Activated CD4-positive, alpha-beta memory T cell treated with anti-CD3 and anti-CD28 coated beads, Interleukin-2, amount 10 ng/mL, durations not matched to agents 7 days and 5 days (primary cell): ENCODE measurements at regions of chr13 and their contacts with region 1.

Region 1: GRCh38 chr13:99436686-99437416 is 64.4 kb upstream of the TM9SF2 start:
- DNase-seq: peak; percentile 96
- H3K4me3 Mint-ChIP-seq: peak overlapping the region; percentile 51
- H3K27ac Mint-ChIP-seq: peak overlapping the region; percentile 48
- H3K4me1 Mint-ChIP-seq: peaks cover 66% of the 10 kb centered on the region
- H3K27me3 Mint-ChIP-seq: peaks cover 21% of the 10 kb centered on the region

Region 2: DNA sequence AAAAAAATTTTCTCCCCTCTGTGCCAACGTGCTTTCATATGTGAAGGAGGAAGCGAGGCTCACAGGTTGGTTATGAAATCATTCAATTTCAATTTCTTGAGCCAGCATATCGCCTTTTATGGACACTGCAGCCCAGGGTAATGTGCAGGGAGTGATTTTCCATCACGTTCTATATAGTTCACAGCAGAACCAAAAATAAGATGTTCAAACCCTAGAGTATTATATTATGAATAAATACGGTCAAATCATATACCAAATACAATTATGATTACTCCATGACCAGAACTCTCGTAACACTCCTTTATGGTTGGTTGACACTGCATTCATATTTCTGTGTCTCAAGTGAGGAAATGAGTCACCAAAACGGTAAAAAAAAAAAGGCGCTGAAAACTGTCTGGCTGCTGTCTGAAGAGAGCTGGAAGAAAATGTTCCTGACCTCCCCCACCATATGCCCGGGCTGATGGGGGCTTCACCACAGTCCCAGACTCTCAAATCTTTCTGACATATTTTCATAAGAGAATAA is 312.0 kb before region 1 on chr13:
- CTCF ChIA-PET with region 1: no interaction called
- POLR2A ChIA-PET with region 1: no interaction called
- DNase-seq: no peak
- H3K4me3 Mint-ChIP-seq: peak overlapping the region; percentile 54
- H3K27ac Mint-ChIP-seq: peak overlapping the region; percentile 66
- H3K4me1 Mint-ChIP-seq: peaks cover 39% of the 10 kb centered on the region
- H3K27me3 Mint-ChIP-seq: no peaks in the 10 kb centered on the region

Region 3: DNA sequence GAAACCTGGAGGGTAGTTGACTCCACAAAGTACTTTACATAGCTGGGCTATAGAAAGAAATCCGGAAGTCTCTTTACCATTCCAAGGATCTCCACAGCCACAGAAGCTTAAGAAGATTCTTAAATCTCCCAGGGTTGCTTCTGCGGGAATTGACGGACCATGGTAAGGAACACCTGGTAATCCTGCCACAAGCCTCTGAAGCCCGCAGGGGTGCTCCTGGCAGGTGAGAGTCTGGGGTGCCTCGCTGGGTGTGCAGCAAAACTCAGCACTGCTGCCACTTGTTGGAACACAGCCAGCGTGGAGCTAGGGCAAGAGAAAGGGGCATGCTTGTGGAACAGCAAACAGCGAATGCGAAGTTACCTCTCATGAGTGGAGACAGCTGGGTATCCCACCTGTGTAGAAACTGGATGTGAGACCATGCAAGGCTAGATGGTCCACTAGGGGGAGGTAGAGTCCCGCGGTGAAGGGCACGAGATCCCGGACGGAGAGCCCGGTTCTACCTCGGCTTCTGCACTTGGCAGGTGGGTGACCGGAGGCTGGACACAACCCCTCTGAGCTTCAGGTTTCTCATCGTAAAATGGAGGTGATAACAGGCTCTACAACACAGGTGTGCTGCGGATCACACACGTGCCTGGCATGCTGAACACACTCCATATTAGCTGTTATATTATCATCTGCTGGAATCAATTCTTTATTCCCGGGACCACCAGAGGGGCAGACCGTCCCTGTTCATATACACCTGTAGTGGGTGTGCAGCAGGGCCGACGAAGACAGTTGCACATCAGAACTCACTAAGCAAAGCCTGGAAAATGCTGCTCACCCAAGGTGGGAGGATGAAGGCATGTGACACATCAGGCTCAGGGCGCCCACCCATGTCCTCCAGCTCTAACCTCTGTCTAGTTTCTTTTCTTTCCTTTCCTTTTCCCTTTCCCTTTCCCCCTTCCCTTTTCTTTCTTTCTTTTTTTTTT is 260.3 kb before region 1 on chr13:
- CTCF ChIA-PET with region 1: interaction called, 37 read pairs
- POLR2A ChIA-PET with region 1: interaction called, 4 read pairs
- DNase-seq: peak; percentile 79
- H3K4me3 Mint-ChIP-seq: no peak overlapping the region
- H3K27ac Mint-ChIP-seq: no peak overlapping the region
- H3K4me1 Mint-ChIP-seq: peaks cover 29% of the 10 kb centered on the region
- H3K27me3 Mint-ChIP-seq: peaks cover 10% of the 10 kb centered on the region

Region 4: GRCh38 chr13:99275093-99275469 is 161.8 kb before region 1 on chr13:
- CTCF ChIA-PET with region 1: interaction called, 317 read pairs
- POLR2A ChIA-PET with region 1: interaction called, 57 read pairs
- DNase-seq: peak; percentile 57
- H3K4me3 Mint-ChIP-seq: no peak overlapping the region
- H3K27ac Mint-ChIP-seq: peak overlapping the region; percentile 65
- H3K4me1 Mint-ChIP-seq: peaks cover 84% of the 10 kb centered on the region
- H3K27me3 Mint-ChIP-seq: no peaks in the 10 kb centered on the region

Region 5: DNA sequence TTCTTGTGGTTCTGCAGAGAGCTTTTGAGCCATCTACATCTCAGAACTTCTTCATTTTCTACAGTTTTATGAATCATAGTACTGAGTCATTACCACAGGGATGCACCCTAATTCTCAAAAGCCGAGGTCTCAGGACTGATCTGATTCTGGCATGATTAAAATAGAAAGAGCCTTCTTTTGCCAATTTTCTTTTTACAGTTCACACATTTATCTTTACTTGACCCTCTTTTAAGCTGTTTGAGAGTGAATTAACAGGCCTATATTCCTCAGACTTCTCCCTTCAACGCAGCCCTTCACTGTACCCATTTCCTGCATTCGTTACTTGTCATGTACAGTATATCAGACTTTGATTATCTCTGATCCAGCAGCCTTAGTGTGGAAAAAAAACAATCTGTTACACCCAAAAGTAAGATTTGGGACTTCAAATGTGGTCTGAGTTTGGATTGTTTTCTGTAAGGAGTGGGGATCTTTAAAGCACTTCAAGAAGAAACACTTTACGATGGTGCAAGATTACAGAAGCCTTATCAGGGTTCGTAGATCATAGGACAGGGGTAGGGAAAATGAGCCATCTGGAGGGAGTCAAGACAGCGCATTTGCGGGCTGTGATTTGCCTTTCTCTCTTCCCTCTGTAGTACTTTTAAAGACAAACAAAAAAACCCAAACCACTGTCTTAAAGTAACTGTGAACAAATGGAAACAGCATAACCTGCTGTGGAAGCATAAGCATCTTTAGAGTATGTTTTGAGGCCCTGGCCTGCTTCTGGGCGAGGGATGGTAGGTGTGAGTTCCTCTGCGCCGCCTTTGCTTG is 114.4 kb before region 1 on chr13:
- CTCF ChIA-PET with region 1: interaction called, 15 read pairs
- POLR2A ChIA-PET with region 1: interaction called, 6 read pairs
- DNase-seq: peak; percentile 44
- H3K4me3 Mint-ChIP-seq: peak overlapping the region; percentile 40
- H3K27ac Mint-ChIP-seq: peak overlapping the region; percentile 97
- H3K4me1 Mint-ChIP-seq: peaks cover 74% of the 10 kb centered on the region
- H3K27me3 Mint-ChIP-seq: no peaks in the 10 kb centered on the region

Region 6: GRCh38 chr13:99380921-99381645 is 55.8 kb before region 1 on chr13:
- CTCF ChIA-PET with region 1: interaction called, 101 read pairs
- POLR2A ChIA-PET with region 1: interaction called, 33 read pairs
- DNase-seq: peak; percentile 77
- H3K4me3 Mint-ChIP-seq: no peak overlapping the region
- H3K27ac Mint-ChIP-seq: peak overlapping the region; percentile 84
- H3K4me1 Mint-ChIP-seq: peaks cover 86% of the 10 kb centered on the region
- H3K27me3 Mint-ChIP-seq: no peaks in the 10 kb centered on the region

Region 7: GRCh38 chr13:99425485-99426341 is 11.1 kb before region 1 on chr13:
- CTCF ChIA-PET with region 1: interaction called, 18 read pairs
- POLR2A ChIA-PET with region 1: interaction called, 7 read pairs
- DNase-seq: peak; percentile 61
- H3K4me3 Mint-ChIP-seq: peak overlapping the region; percentile 34
- H3K27ac Mint-ChIP-seq: peak overlapping the region; percentile 81
- H3K4me1 Mint-ChIP-seq: peaks cover 37% of the 10 kb centered on the region
- H3K27me3 Mint-ChIP-seq: peaks cover 21% of the 10 kb centered on the region

Region 8: DNA sequence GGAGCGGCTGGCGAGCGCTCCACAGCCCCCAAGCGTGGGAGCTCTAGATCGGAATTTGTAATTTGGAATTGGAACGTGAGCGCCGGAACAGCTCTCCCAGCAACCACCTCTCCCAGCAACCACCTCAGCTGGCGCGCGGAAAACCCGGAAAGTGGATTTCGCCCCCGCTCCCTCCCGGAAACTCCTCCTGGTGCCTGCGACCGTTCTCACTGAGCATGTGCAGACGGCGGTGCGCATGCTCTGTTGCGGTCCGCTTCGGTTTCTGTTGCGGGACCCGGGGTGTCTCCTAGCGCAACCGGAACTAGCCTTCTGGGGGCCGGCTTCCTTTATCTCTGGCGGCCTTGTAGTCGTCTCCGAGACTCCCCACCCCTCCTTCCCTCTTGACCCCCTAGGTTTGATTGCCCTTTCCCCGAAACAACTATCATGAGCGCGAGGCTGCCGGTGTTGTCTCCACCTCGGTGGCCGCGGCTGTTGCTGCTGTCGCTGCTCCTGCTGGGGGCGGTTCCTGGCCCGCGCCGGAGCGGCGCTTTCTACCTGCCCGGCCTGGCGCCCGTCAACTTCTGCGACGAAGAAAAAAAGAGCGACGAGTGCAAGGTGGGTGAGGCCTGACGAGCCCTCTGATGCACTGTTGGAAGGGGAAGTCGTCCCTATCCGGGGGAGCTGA is 64.5 kb after region 1 on chr13 and contains the start of gene TM9SF2:
- CTCF ChIA-PET with region 1: interaction called, 87 read pairs
- POLR2A ChIA-PET with region 1: interaction called, 10 read pairs
- DNase-seq: peak; percentile 97
- H3K4me3 Mint-ChIP-seq: peak within 1 kb of the TSS; percentile 90
- H3K27ac Mint-ChIP-seq: peak within 1 kb of the TSS; percentile 97
- H3K4me1 Mint-ChIP-seq: peaks cover 80% of the 10 kb centered on the region
- H3K27me3 Mint-ChIP-seq: no peaks in the 10 kb centered on the region
- total RNA-seq, gene TM9SF2: 84.5 to 88.6 TPM